Activated naive CD4-positive, alpha-beta T cell treated with anti-CD3 and anti-CD28 coated beads for 36 hours (primary cell): ENCODE measurements at regions of chr2 and their contacts with region 1.

Region 1: GRCh38 chr2:119659601-119660342 is 19.2 kb upstream of the TMEM177 start:
- DNase-seq: peak; percentile 56
- H3K4me3 Mint-ChIP-seq: no peak overlapping the region
- H3K27ac Mint-ChIP-seq: no peak overlapping the region
- H3K4me1 Mint-ChIP-seq: no peaks in the 10 kb centered on the region
- H3K27me3 Mint-ChIP-seq: no peaks in the 10 kb centered on the region

Region 2: GRCh38 chr2:119234377-119235019 is 425.3 kb before region 1 on chr2:
- CTCF ChIA-PET with region 1: no interaction called
- intact Hi-C with region 1: no loop called
- DNase-seq: peak; percentile 18
- H3K4me3 Mint-ChIP-seq: no peak overlapping the region
- H3K27ac Mint-ChIP-seq: no peak overlapping the region
- H3K4me1 Mint-ChIP-seq: peaks cover 3% of the 10 kb centered on the region
- H3K27me3 Mint-ChIP-seq: no peaks in the 10 kb centered on the region

Region 3: DNA sequence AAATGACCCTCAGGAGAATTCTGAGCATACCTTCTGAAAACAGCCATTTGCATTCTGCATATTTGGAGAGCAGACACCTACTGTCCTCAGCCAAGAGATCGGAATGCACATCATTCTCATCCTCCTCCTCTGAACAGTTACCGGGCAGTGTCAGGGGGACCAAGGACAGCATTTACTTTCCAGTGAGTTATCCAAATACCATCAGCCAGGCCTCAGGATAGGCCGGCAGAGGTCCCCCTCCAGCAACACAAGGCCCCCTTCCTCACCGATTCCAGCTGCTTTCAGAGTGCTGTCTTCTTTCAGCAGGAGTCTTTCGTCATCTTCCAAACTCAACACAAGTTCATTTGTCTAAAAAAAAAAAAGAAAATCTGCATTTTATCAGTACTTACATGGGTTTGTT is 348.4 kb before region 1 on chr2:
- CTCF ChIA-PET with region 1: no interaction called
- intact Hi-C with region 1: no loop called
- DNase-seq: no peak
- H3K4me3 Mint-ChIP-seq: no peak overlapping the region
- H3K27ac Mint-ChIP-seq: no peak overlapping the region
- H3K4me1 Mint-ChIP-seq: no peaks in the 10 kb centered on the region
- H3K27me3 Mint-ChIP-seq: no peaks in the 10 kb centered on the region

Region 4: GRCh38 chr2:119407430-119408220 is 252.1 kb before region 1 on chr2:
- CTCF ChIA-PET with region 1: no interaction called
- intact Hi-C with region 1: loop called (anchors 1 kb)
- DNase-seq: peak; percentile 52
- H3K4me3 Mint-ChIP-seq: no peak overlapping the region
- H3K27ac Mint-ChIP-seq: no peak overlapping the region
- H3K4me1 Mint-ChIP-seq: no peaks in the 10 kb centered on the region
- H3K27me3 Mint-ChIP-seq: peaks cover 2% of the 10 kb centered on the region

Region 5: DNA sequence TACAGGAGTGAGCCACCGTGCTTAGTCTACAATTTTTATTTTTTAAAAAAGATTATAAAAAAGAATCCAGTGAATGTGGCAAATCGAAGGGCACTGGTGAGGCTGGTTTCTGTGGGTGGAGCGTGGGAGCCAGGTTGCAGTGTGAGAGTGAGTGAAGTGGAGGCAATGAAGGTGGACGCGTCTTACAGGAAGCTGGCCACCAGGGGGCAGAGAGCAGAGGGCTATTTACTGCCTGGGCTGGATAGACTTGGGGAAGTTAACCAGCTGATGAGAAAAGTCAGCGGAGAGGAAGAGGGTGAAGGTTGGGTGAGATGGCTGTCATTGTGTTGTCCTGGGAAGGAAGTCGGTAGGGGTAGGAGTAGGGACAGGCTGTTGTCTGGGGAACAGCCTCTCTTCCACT is 142.3 kb before region 1 on chr2:
- CTCF ChIA-PET with region 1: no interaction called
- intact Hi-C with region 1: loop called (anchors 1 kb)
- DNase-seq: peak; percentile 60
- H3K4me3 Mint-ChIP-seq: no peak overlapping the region
- H3K27ac Mint-ChIP-seq: no peak overlapping the region
- H3K4me1 Mint-ChIP-seq: no peaks in the 10 kb centered on the region
- H3K27me3 Mint-ChIP-seq: peaks cover 25% of the 10 kb centered on the region